PC-9 (cell line): ENCODE measurements at regions of chr12 and their contacts with region 1.

Region 1: GRCh38 chr12:1795785-1796514 is 24.4 kb upstream of the LRTM2 start:
- DNase-seq: peak; percentile 57 to 94
- H3K4me3 ChIP-seq: peak overlapping the region; percentile 50
- H3K27ac ChIP-seq: no peak overlapping the region
- H3K4me1 ChIP-seq: peaks cover 6% of the 10 kb centered on the region; the same call in 1 of the 2 replicates
- H3K27me3 ChIP-seq: peaks cover 6% of the 10 kb centered on the region
- CTCF ChIP-seq: peak; percentile 94

Region 2: GRCh38 chr12:1605129-1606020 is 190.6 kb before region 1 on chr12:
- CTCF ChIA-PET with region 1: no interaction called
- POLR2A ChIA-PET with region 1: no interaction called
- intact Hi-C with region 1: loop called (anchors 1 kb)
- DNase-seq: peak; percentile 74 to 83
- H3K4me3 ChIP-seq: peak overlapping the region; percentile 47
- H3K27ac ChIP-seq: peak overlapping the region; percentile 64
- H3K4me1 ChIP-seq: peaks cover 29% of the 10 kb centered on the region
- H3K27me3 ChIP-seq: no peaks in the 10 kb centered on the region
- CTCF ChIP-seq: peak; percentile 90

Region 3: DNA sequence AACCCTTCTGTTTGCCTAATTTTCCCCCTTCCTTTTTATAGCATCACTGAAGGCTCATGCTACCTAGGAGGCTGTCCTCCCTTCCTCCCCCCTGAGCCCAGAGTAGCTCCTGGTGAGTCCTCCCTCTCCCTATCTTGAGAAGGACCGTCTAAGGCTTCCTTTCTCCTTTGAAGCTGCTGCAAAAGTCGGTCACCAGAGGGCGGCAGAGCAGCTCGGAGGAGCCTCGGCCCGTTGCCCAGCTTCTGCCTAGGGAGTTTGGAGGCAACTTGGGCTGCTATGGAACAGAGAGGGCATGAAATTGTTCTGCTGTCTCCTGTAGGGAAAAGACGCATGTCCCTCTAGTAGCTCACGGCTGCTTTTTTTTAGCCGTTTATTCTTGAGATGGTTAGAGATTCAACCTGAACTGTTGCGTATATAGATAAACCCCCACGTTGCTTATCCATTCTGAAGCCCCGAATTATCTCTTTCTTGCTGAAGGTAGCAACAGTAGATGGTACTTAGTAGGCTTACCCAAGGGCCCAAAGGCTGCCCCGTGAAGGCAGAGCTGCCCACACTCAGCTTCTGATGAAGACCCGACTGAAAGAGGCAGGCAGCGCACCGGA is 161.3 kb before region 1 on chr12:
- CTCF ChIA-PET with region 1: interaction called, 9 read pairs
- POLR2A ChIA-PET with region 1: no interaction called
- intact Hi-C with region 1: loop called (anchors 1 kb)
- DNase-seq: peak; percentile 50 to 63
- H3K4me3 ChIP-seq: no peak overlapping the region
- H3K27ac ChIP-seq: no peak overlapping the region
- H3K4me1 ChIP-seq: no peaks in the 10 kb centered on the region
- H3K27me3 ChIP-seq: peaks cover 52% of the 10 kb centered on the region
- CTCF ChIP-seq: peak; percentile 90

Region 4: DNA sequence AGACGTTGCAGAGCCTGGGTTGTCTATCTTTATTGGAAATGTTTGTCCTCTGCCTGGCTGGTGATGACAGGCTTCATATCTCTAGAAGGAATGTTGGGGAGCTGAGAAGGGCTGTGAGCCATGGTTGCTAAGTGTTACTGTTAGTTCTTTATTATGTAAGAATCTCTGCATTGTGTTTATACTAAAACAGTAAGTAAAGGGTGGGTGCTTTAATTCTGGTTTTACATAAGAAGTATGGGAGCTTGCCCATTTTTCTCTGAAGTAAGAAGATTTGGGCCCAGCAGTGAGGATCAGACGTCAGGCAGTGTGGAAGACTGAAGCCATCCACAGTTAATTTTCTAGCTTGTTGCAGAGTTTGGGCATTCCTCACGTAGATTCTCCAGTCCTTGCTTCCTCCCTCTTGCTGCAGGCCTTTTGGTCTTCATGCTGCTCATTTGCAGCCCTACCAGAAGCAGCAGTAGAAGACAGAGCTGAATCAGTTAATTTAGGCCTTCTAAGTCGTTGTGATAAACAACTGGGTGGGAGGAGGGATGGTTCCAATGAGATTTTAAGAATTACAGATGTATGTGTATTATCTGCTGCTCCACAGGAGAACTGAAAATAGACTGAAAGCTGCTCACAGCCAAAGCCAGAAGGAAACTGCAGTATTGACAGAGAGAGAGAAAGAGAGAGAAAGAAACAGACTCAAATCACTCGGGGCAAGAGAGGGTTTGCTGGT is 145.5 kb before region 1 on chr12:
- CTCF ChIA-PET with region 1: interaction called, 32 read pairs
- POLR2A ChIA-PET with region 1: interaction called, 5 read pairs
- intact Hi-C with region 1: loop called (anchors 1 kb)
- DNase-seq: no peak
- H3K4me3 ChIP-seq: no peak overlapping the region
- H3K27ac ChIP-seq: no peak overlapping the region
- H3K4me1 ChIP-seq: no peaks in the 10 kb centered on the region
- H3K27me3 ChIP-seq: no peaks in the 10 kb centered on the region
- CTCF ChIP-seq: no peak

Region 5: DNA sequence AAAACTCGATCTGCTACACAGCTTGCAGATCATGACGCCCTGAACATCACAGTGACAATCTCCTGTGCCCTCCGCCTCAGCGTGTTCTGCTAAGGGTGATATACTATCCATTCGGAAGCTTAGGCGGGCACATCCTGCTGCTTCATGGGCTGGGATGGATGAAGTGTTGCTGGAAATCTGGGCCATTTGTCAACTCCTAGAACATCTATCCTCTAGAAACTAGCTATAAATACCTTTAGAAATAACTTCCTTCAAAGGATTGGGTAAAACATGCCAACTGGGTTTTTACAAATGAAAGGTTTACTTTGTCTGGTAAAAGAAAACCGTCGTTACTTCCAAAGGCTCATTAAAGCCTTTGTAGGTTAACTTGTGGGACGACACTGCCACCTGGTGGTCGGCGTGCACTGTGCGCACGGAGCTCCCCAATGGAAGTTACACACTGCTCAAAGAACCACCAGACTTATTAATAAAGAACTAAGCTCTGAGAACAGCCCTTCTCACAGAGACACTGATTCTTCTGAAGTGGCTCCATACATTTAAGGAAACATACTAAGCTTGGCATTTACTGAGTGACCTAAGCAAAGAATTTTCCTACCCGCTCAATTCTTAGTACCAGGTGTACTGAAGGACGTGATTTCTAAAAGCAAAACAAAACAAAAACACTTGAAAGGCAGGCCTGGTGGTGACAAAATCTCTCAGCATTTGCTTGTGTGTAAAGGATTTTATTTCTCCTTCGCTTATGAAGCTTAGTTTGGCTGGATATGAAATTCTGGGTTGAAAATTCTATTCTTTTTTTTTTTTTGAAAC is 144.1 kb after region 1 on chr12:
- CTCF ChIA-PET with region 1: interaction called, 10 read pairs
- POLR2A ChIA-PET with region 1: no interaction called
- intact Hi-C with region 1: loop called (anchors 1 kb)
- DNase-seq: peak; percentile 58 to 81
- H3K4me3 ChIP-seq: no peak overlapping the region
- H3K27ac ChIP-seq: no peak overlapping the region
- H3K4me1 ChIP-seq: no peaks in the 10 kb centered on the region
- H3K27me3 ChIP-seq: no peaks in the 10 kb centered on the region
- CTCF ChIP-seq: peak; percentile 96

Region 6: DNA sequence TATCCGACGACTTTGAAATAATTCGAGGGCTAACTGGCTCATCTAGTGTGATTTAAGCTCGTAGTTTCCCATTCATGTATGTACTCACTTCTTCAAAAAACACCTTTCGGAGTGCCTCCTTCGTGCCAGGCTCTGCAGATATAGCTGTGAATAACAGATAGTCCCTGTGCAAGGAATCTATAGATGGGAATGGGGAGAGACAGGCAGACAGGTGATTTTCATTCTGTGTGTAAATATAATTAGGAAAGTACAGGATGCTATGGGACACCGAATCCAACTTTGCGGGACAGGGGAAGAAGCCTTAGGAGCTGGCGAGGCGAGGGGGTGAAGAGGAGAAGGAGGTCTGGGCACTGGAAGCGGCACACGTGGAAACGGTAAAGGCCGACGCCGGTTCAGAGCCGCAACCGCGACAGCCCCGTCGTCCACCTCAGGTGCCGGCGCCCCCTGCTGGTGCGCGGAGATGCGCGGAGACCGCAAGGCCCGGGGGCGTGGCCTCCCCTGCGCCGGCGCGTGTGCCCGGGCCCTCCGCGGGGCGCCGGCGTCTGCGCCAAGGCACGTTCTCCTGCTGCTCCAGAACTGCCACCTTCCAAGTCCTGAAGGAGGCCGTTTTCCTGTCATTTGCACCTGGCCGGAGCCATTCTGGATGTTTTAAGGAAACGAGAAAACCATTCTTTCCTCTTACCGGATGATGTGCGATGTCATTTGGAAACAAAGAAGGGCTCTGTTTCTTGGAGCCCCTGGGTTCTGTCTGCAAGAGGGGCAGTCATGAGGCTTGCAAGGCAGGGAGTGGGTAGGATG is 238.9 kb after region 1 on chr12:
- CTCF ChIA-PET with region 1: no interaction called
- POLR2A ChIA-PET with region 1: no interaction called
- intact Hi-C with region 1: loop called (anchors 1 kb)
- DNase-seq: peak in 1 of 2 experiments; percentile 77
- H3K4me3 ChIP-seq: peak overlapping the region; percentile 13; the same call in 1 of the 2 replicates
- H3K27ac ChIP-seq: no peak overlapping the region
- H3K4me1 ChIP-seq: no peaks in the 10 kb centered on the region
- H3K27me3 ChIP-seq: peaks cover 100% of the 10 kb centered on the region
- CTCF ChIP-seq: peak; percentile 74

Region 7: DNA sequence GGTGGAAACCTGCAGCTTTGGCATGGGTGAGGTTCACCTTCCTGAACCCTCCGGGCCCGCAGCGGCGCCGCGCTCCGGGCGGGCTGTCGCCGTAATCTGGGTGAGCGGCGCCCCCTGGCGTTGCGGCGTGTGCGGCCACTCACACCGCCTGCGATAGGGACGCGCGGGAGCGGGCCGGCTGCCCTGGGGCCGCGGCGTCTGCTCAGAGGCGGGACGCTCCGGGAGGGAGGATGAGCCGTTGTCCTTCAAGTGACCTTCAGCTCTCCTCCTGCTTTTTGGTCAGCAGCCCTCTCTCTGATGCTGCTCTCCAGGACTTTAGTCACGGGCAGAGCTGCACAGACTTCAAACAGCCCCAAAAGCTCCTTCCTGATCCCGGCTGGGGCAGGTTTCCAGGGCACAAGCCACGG is 787.1 kb after region 1 on chr12:
- CTCF ChIA-PET with region 1: no interaction called
- POLR2A ChIA-PET with region 1: no interaction called
- intact Hi-C with region 1: loop called (anchors 5 kb)
- DNase-seq: peak in 1 of 2 experiments; percentile 29
- H3K4me3 ChIP-seq: no peak overlapping the region
- H3K27ac ChIP-seq: no peak overlapping the region
- H3K4me1 ChIP-seq: no peaks in the 10 kb centered on the region
- H3K27me3 ChIP-seq: peaks cover 95% of the 10 kb centered on the region
- CTCF ChIP-seq: peak; percentile 67